ENCODE measurements at regions of chr17 and their contacts with region 1.

Region 1: GRCh38 chr17:28057731-28058279 is 15.3 kb downstream of the NLK start:
- DNase-seq: no peak
- ATAC-seq: no peak

Region 2: GRCh38 chr17:28001149-28001548 is 56.7 kb before region 1 on chr17:
- intact Hi-C with region 1: no loop called
- DNase-seq: no peak
- ATAC-seq: no peak

Region 3: GRCh38 chr17:28404812-28405570 is 347.2 kb after region 1 on chr17:
- intact Hi-C with region 1: loop called (anchors 5 kb)
- DNase-seq: no peak
- ATAC-seq: no peak